ENCODE measurements at regions of chr18 and their contacts with region 1.

Region 1: DNA sequence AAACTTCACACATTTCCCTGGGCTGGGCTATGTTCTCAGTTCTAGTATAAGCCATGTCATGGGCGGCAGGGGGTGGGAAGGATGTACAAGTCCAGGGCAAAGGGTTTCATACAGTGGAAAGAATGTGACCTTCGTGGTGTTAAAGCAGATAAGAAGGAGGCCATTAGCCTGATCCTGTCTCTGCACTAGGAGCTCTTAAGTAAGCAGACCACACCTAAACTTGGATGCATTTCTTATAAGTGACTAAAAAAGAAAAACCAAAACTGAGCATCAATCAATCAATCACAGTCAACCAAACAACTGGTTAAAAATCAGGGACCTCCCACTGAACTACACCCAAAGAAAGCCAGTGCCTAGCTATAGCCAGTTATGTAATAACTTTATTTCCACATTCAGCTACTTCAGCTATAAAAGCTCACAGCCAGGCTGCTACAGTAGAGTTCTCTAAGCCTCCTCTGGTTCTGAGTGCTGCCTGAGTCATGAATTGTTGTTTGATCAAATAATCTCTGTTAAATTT is 46.8 kb upstream of the RIOK3 start:
- DNase-seq: peak; percentile 40
- ATAC-seq: peak; percentile 63; the same call in 1 of the 2 replicates
- H3K4me3 ChIP-seq: no peak overlapping the region
- H3K27ac ChIP-seq: no peak overlapping the region
- H3K4me1 ChIP-seq: peaks cover 6% of the 10 kb centered on the region
- H3K27me3 ChIP-seq: no peaks in the 10 kb centered on the region
- CTCF ChIP-seq: no peak
- POLR2A ChIP-seq: no peak
- RAD21 ChIP-seq: no peak

Region 2: DNA sequence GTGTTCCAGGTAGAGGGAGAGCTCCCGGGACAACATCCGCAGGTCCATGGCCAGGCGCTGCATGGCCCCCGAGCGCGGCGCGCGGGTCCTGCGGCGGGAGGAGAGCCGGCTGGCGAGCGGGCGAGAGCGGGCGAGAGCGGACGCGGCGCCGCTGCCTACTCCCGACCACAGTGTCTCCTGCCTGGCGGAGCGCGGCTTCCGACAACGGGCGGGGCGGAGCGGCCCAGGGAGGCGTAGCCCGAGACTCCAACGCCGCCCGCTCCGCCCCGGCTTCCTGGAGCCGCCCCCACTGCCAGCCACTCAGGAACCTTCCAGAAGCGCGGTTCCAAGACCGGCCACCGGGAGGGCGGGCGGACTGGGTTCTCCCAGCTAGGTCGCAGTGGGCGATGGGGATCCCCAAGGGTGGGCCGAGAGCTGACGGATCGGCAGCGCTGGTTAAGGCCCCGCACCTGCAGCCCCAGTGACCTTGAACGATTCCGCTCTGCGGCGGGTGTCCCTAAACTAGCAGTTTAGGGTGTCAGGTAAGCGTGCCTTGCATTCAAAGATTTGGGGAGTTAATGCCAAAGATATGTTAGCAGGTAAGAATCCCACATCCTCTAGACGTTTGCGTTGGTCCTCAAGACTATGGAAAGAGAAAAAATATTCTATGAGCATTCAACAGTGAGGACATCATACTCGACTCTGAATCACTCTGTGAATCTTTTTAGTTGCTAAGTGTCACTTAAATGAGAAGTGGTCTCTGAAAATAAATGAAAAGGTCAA is 1701.5 kb before region 1 on chr18 and contains the start of gene ABHD3:
- CTCF ChIA-PET with region 1: no interaction called
- POLR2A ChIA-PET with region 1: no interaction called
- dilution Hi-C with region 1: no loop called
- in situ Hi-C with region 1: no loop called
- intact Hi-C with region 1: no loop called
- DNase-seq: peak; percentile 85
- ATAC-seq: peak; percentile 100
- H3K4me3 ChIP-seq: peak within 1 kb of the TSS; percentile 99
- H3K27ac ChIP-seq: peak within 1 kb of the TSS; percentile 79
- H3K4me1 ChIP-seq: no peaks in the 10 kb centered on the region; the same call in 1 of the 2 replicates
- H3K27me3 ChIP-seq: no peaks in the 10 kb centered on the region
- CTCF ChIP-seq: peak; percentile 28; the same call in 1 of the 2 replicates
- POLR2A ChIP-seq: peak; percentile 78
- RAD21 ChIP-seq: no peak
- total RNA-seq, gene ABHD3: 3.3 and 4.5 TPM in 2 replicates

Region 3: GRCh38 chr18:23067236-23067635 is 339.1 kb before region 1 on chr18:
- CTCF ChIA-PET with region 1: no interaction called
- POLR2A ChIA-PET with region 1: interaction called, 12 read pairs
- dilution Hi-C with region 1: no loop called
- in situ Hi-C with region 1: no loop called
- intact Hi-C with region 1: no loop called
- DNase-seq: peak; percentile 7
- ATAC-seq: 0 out of 2 replicates have a peak, but pooled peaks have one; percentile 27
- H3K4me3 ChIP-seq: no peak overlapping the region
- H3K27ac ChIP-seq: no peak overlapping the region
- H3K4me1 ChIP-seq: no peaks in the 10 kb centered on the region
- H3K27me3 ChIP-seq: no peaks in the 10 kb centered on the region
- CTCF ChIP-seq: no peak
- POLR2A ChIP-seq: no peak
- RAD21 ChIP-seq: no peak